ENCODE measurements at regions of chr12 and their contacts with region 1.

Region 1: GRCh38 chr12:124927201-124928094 is 13.0 kb upstream of the UBC start:
- DNase-seq: peak; percentile 86 to 95 (median 92)
- ATAC-seq: peak; percentile 93
- H3K4me3 ChIP-seq: peak overlapping the region; percentile 91
- H3K4me3 Mint-ChIP-seq: peak overlapping the region; percentile 84 to 97 (median 93)
- H3K27ac ChIP-seq: peak overlapping the region; percentile 65
- H3K27ac Mint-ChIP-seq: peak overlapping the region; percentile 90 to 100 (median 98)
- H3K4me1 ChIP-seq: peaks cover 15 to 18% of the 10 kb centered on the region in 2 donors
- H3K4me1 Mint-ChIP-seq: peaks cover 18 to 37% (median 32%) of the 10 kb centered on the region in 7 donors
- H3K27me3 ChIP-seq: no peaks in the 10 kb centered on the region
- H3K27me3 Mint-ChIP-seq: peaks cover 0 to 9% (median 0%) of the 10 kb centered on the region in 5 donors

Region 2: DNA sequence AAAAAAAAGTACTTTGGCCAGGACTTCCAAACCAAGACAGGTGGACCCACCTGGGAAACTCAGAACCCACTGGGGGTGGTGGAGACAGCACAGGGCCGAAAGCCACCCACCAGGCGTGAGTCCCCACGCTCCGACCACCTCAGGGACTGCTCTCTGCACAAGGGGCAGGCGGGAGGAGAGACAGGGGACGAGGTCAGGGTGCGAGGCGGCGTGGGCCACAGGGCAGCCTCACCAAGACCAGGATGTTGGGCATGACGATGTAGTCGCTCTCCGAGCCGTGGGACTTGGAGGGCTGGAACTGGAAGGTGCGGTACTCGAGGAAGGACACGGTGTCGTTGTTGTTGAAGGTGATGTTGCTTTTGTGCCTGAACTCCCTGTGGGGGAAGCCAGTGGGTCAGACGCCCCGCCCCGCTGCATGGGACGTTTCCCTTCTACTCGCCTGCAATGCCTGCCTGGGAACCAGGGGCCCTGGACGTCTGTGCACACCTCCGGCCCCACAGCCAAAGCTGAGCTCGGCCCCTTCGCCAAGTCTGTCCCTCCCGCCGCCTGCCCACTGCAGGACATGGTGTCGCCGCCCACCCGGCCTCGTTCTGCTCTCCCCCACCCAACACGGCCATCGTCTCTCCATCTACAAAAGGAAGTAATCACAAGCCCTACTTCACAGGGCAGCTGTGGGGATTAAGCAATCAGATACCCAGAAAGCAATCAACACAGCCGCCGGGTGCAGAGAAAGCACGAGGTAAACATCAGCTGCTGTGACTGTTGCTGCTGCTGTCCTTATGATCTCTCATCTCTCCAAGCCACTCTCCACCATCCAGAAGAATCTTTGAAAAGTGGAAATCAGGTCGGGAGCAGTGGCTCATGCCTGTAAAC is 112.5 kb before region 1 on chr12:
- CTCF ChIA-PET with region 1: no interaction called
- POLR2A ChIA-PET with region 1: no interaction called
- intact Hi-C with region 1: no loop called
- DNase-seq: no peak
- ATAC-seq: peak; percentile 50
- H3K4me3 ChIP-seq: no peak overlapping the region
- H3K4me3 Mint-ChIP-seq: no peak overlapping the region
- H3K27ac ChIP-seq: no peak overlapping the region
- H3K27ac Mint-ChIP-seq: peak overlapping the region in 1 of 9 donors; percentile 67
- H3K4me1 ChIP-seq: no peaks in the 10 kb centered on the region
- H3K4me1 Mint-ChIP-seq: peaks cover 0 to 5% (median 0%) of the 10 kb centered on the region in 7 donors
- H3K27me3 ChIP-seq: no peaks in the 10 kb centered on the region
- H3K27me3 Mint-ChIP-seq: no peaks in the 10 kb centered on the region

Region 3: DNA sequence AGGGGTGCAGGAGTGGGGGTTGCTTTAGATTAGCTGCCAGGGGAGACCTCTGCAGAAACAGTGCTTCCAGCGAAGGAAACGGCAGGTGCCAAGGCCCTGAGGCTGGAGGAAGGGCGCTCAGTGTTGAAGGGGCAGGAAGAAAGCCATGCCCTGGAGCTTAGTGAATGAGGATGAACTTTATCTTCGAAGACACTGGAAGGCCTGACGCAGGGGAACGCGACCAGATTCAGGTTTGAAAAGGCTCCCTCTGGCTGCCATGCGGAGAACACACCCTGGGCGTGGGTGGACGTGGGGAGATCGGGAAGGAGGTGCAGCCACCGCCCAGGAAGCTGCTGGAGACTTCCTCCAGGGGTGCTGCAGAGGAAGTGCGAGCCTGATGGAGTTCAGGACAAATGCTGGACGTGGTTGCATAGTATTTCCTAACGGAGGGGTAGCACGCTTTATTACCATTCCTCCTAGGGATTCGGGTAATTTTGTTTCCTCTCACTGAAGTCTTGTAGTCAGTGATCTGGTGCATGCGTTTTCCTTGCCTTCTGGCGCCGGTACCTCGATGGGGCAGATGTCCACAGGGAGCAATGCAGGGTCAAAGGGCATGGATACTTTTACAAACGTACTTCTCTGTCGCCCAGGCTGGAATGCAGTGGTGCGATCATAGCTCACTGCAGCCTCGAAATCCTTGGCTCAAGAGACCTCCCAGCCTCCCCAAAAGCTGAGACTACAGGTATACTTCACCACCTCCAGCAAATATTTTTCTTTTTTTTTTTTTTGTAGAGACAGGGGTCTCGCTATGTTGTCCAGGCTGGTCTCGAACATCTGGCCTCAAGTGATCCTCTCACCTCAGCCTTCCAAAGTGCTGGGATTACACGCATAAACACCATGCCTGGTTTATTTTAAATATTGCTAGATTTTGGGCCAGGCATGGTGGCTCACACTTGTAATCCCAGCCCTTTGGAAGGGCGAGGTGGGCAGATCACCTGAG is 13.4 kb after region 1 on chr12:
- CTCF ChIA-PET with region 1: interaction called, 205 read pairs
- POLR2A ChIA-PET with region 1: interaction called, 764 read pairs
- intact Hi-C with region 1: loop called (anchors 1 kb)
- DNase-seq: peak; percentile 48 to 85 (median 78)
- ATAC-seq: peak; percentile 74
- H3K4me3 ChIP-seq: peak overlapping the region; percentile 97
- H3K4me3 Mint-ChIP-seq: no peak overlapping the region
- H3K27ac ChIP-seq: peak overlapping the region; percentile 66
- H3K27ac Mint-ChIP-seq: no peak overlapping the region
- H3K4me1 ChIP-seq: peaks cover 19 to 26% of the 10 kb centered on the region in 2 donors
- H3K4me1 Mint-ChIP-seq: peaks cover 0 to 22% (median 0%) of the 10 kb centered on the region in 7 donors
- H3K27me3 ChIP-seq: no peaks in the 10 kb centered on the region
- H3K27me3 Mint-ChIP-seq: no peaks in the 10 kb centered on the region

Measured in naive thymus-derived CD4-positive, alpha-beta T cell (primary cell).